GM10248 (cell line): ENCODE measurements at regions of chr7 and their contacts with region 1.

Region 1: GRCh38 chr7:128209229-128210035 is 31.6 kb upstream of the LEP start:
- DNase-seq: peak; percentile 87
- CTCF ChIP-seq: peak; percentile 99

Region 2: DNA sequence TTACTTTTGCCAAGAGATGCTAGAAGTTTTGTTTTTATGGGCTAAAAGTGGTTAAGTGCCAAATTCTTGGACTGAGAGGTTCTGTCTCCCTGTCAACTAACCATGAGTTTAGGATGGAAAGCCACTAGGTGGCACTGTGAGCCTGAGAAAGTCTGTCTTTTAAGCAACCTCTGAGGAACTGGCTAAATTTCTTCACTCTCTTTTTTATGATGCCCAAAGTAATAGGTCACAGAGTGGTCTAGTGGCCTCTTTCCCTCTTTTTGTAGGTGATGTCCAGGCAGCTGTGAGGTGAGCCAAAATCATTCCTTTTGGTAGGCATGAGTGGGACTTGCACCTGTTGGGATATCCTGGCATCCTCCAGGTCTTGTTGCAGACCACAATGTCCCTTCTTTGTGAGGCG is 500.6 kb before region 1 on chr7:
- CTCF ChIA-PET with region 1: interaction called, 150 read pairs
- POLR2A ChIA-PET with region 1: no interaction called
- DNase-seq: peak; percentile 32
- CTCF ChIP-seq: peak; percentile 61

Region 3: DNA sequence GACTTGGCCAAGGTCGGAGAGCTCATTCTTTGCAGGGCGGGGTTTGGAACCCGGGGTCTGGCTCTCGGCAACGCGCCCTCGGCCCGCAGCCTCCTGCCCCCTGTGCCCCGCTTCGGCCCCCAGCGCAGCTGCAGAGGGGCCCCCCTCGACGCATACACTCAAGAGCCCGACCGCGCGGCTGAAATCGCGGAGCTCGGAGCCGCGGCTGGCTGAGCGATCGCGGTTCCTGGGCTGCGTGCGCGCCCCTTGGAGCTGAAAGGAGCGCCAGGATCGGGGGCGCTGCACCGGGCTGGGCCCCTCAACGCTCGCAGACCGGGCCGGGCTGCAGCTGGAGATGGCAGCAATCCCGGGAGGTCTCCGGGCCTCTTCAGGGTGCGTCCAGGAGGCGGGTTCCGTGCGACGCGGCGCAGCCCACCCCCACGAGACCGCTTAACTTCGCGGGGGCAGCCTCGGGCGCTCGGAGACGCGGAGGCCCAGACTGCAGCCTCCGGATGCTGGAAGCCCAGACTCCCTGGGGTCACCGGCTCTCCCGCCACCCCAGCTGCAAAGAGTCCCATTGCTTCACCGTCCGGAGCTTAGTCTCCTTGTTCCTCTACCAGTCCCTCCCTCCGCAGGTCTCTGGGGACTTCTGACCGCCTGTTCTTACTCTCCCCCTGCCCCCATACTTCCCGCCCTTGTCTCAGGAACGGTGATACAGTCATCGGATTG is 105.2 kb before region 1 on chr7:
- CTCF ChIA-PET with region 1: interaction called, 12 read pairs
- POLR2A ChIA-PET with region 1: no interaction called
- DNase-seq: peak; percentile 56
- CTCF ChIP-seq: no peak

Region 4: GRCh38 chr7:128176696-128177095 is 32.7 kb before region 1 on chr7:
- CTCF ChIA-PET with region 1: interaction called, 14 read pairs
- POLR2A ChIA-PET with region 1: no interaction called
- DNase-seq: no peak
- CTCF ChIP-seq: no peak

Region 5: DNA sequence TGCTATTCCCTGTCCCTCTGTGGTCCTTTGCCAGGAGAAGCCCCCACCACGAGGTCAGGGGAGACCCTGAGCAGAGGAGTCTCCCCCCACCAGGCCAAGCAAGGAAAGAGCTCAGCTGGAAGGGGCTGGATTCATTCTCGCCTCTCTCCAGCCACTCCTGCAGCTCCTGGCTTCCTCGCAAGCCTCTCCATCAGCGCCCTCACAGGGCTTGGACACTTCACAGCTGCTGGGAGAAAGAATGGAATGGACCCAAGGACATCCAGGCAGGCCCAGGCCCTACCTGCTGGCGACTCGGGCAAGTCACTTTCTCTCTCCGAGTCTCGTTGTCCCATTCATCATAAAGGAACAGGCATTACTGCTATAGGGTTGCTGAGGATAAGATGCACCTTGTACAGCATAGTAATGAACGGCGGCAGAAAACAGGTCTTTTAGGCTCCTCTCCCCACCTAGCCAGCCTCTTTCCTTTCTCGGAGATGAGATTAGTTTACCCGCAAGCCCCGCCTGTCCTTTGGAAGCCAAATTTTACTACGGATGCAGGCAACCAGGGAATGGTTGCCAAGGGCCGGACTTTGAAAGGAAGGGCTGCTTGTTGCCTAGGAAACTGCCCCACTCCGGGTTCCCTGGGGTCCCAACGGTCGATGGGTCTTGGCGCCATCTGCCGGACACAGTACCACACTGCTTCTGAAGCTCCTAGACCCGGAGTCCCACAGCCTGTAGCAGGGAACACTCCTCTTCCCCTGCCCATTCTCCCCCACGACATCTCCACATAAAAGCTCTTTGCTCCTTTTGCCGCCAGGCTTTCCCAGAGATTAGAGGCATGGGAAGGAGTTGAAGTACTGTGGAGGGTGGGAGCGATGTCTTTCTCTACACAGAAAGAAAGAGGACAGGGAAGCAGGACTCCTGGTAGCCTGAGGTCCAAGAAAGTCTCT is 178.0 kb after region 1 on chr7:
- CTCF ChIA-PET with region 1: no interaction called
- POLR2A ChIA-PET with region 1: no interaction called
- DNase-seq: peak; percentile 89
- CTCF ChIP-seq: peak; percentile 89